Endothelial cell of umbilical vein (primary cell): ENCODE measurements at regions of chr9 and their contacts with region 1.

Region 1: GRCh38 chr9:113446323-113446740 is 17.2 kb upstream of the RGS3 start:
- DNase-seq: peak; percentile 79
- H3K4me3 ChIP-seq: no peak overlapping the region
- H3K27ac ChIP-seq: no peak overlapping the region
- H3K4me1 ChIP-seq: peaks cover 4% of the 10 kb centered on the region
- H3K27me3 ChIP-seq: no peaks in the 10 kb centered on the region
- CTCF ChIP-seq: peak; percentile 28 to 35
- POLR2A ChIP-seq: no peak

Region 2: DNA sequence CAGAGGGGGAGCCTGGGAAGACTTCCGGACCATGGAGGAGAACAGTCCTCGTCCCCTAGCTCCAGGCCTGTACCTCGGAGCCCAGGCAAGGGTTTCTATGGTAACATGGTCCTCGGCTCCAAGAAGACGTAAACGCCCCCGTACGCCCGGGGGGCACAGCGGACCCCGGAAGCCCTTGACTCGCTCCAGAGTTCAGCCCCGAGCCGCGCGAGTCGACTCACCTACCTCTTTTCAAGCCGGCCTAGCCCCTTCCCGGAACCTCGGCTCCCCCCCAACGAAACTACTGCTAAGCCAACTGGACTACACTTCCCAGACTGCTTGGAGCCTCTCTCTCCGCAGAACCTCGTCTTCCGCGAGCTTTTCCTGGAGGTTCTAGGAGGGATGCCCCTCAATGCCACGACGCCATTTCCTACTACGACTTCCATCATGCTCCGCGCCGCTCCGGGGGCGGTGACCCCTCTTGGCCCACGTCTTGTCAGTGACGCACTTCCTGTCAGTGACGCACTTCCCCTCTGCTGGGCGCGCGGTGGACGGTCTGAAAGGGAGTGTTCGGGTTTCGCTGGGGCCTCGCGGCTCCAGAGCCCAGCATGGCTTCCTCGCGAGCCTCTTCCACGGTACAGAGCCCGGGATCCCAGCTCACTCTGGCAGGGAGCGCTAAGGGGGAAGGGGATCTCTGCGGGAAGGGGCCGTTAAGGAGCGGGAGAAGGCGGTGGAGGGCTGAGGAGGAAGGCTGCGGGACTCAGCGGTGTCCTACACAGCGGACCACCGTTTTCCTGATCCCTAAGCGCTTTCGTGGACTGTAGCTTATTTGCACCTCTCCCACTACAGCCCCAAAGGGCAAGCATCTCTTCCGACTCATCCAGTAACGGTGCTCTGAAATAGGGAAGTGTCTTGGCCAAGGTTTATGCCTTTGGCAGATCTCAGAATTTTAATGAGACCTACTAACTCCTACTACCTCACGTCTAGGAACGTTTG is 170.9 kb before region 1 on chr9 and contains the starts of genes CDC26 and PRPF4:
- CTCF ChIA-PET with region 1: interaction called, 13 read pairs
- POLR2A ChIA-PET with region 1: no interaction called
- dilution Hi-C with region 1: no loop called
- intact Hi-C with region 1: no loop called
- DNase-seq: peak; percentile 99
- H3K4me3 ChIP-seq: peak within 1 kb of the TSS; percentile 55 to 81 (median 74)
- H3K27ac ChIP-seq: peak within 1 kb of the TSS; percentile 94
- H3K4me1 ChIP-seq: peaks cover 13% of the 10 kb centered on the region
- H3K27me3 ChIP-seq: no peaks in the 10 kb centered on the region
- CTCF ChIP-seq: no peak
- POLR2A ChIP-seq: peak; percentile 94
- total RNA-seq, gene CDC26: 36.9 and 37.5 TPM in 2 replicates
- total RNA-seq, gene PRPF4: 24.2 and 25.8 TPM in 2 replicates

Region 3: GRCh38 chr9:113410207-113410864 is 36.0 kb before region 1 on chr9 and contains the starts of genes C9orf43 and POLE3:
- CTCF ChIA-PET with region 1: interaction called, 10 read pairs
- POLR2A ChIA-PET with region 1: no interaction called
- dilution Hi-C with region 1: no loop called
- intact Hi-C with region 1: loop called (anchors 5 kb)
- DNase-seq: peak; percentile 97
- H3K4me3 ChIP-seq: peak within 1 kb of the TSS; percentile 86 to 98 (median 92)
- H3K27ac ChIP-seq: peak within 1 kb of the TSS; percentile 84
- H3K4me1 ChIP-seq: peaks cover 9% of the 10 kb centered on the region
- H3K27me3 ChIP-seq: no peaks in the 10 kb centered on the region
- CTCF ChIP-seq: no peak
- POLR2A ChIP-seq: peak; percentile 72
- total RNA-seq, gene C9orf43: 0.66 and 0.88 TPM in 2 replicates
- total RNA-seq, gene POLE3: 53.8 and 54.3 TPM in 2 replicates

Region 4: GRCh38 chr9:113492343-113493212 is 46.2 kb after region 1 on chr9:
- CTCF ChIA-PET with region 1: interaction called, 13 read pairs
- POLR2A ChIA-PET with region 1: no interaction called
- dilution Hi-C with region 1: no loop called
- intact Hi-C with region 1: no loop called
- DNase-seq: peak; percentile 89
- H3K4me3 ChIP-seq: no peak overlapping the region
- H3K27ac ChIP-seq: no peak overlapping the region
- H3K4me1 ChIP-seq: peaks cover 8% of the 10 kb centered on the region
- H3K27me3 ChIP-seq: no peaks in the 10 kb centered on the region
- CTCF ChIP-seq: no peak
- POLR2A ChIP-seq: no peak

Region 5: GRCh38 chr9:113511856-113512761 is 65.8 kb after region 1 on chr9:
- CTCF ChIA-PET with region 1: interaction called, 39 read pairs
- POLR2A ChIA-PET with region 1: interaction called, 5 read pairs
- dilution Hi-C with region 1: no loop called
- intact Hi-C with region 1: no loop called
- DNase-seq: no peak
- H3K4me3 ChIP-seq: no peak overlapping the region
- H3K27ac ChIP-seq: peak overlapping the region; percentile 28
- H3K4me1 ChIP-seq: peaks cover 57% of the 10 kb centered on the region
- H3K27me3 ChIP-seq: no peaks in the 10 kb centered on the region
- CTCF ChIP-seq: no peak
- POLR2A ChIP-seq: no peak

Region 6: DNA sequence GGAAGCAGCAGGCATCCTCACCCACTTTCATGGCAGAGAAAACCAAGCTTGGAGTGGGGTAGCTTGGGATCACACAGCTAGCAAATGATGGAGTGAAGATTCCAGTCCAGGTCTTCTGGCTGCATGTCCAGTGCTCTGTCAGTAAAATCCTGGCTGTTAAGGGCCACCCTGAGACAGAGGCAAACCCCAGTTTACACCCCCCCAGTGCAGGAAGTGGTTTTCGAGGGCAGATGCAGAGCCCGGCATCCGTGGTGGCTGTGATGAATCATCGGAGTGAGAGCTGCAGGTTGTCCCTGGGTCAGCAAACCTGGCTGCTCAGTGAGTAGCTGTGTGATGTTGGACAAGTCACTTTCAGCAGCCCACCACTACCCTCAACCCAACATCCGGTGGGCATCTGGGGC is 132.6 kb after region 1 on chr9:
- CTCF ChIA-PET with region 1: interaction called, 22 read pairs
- POLR2A ChIA-PET with region 1: no interaction called
- dilution Hi-C with region 1: no loop called
- intact Hi-C with region 1: no loop called
- DNase-seq: peak; percentile 49
- H3K4me3 ChIP-seq: no peak overlapping the region
- H3K27ac ChIP-seq: peak overlapping the region; percentile 39
- H3K4me1 ChIP-seq: peaks cover 48% of the 10 kb centered on the region
- H3K27me3 ChIP-seq: no peaks in the 10 kb centered on the region
- CTCF ChIP-seq: no peak
- POLR2A ChIP-seq: no peak

Region 7: DNA sequence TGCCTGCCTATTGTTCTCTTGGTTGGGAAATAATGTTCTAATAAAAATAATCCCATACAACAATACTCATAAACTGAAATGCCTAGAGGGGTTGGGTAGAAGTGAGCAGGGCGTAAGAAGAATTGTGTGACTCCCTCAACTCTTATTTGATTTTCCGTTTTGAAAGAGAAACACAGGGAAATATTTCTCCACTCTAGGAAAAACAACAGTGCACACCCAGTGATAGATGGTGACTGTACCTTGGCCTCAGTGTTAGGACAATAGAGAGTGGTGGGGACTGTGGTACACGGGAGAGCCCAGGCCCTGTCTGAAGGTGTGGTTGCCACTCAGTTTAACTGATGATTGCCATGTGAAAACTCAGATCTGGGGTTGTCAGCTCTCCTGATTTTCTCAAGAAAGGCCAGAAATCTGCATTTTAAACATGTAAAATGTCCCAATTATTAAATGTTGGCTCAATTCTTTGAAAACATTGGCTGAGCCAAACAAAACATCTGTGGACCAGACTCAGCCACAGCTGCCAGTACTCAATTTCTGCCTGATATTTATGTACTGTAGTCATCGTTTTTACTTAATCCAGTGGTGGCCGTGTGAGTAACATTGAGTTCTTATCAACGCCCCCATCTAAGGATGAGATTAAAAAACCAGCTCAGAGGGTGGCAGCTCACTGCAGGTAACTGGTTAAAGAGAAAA is 325.9 kb after region 1 on chr9:
- CTCF ChIA-PET with region 1: no interaction called
- POLR2A ChIA-PET with region 1: no interaction called
- dilution Hi-C with region 1: no loop called
- intact Hi-C with region 1: no loop called
- DNase-seq: peak; percentile 76
- H3K4me3 ChIP-seq: no peak overlapping the region
- H3K27ac ChIP-seq: no peak overlapping the region
- H3K4me1 ChIP-seq: no peaks in the 10 kb centered on the region
- H3K27me3 ChIP-seq: peaks cover 9 to 14% of the 10 kb centered on the region in 2 experiments
- CTCF ChIP-seq: no peak
- POLR2A ChIP-seq: no peak